Transverse colon (tissue), 4 donors: ENCODE measurements at regions of chr16 and their contacts with region 1.

Region 1: DNA sequence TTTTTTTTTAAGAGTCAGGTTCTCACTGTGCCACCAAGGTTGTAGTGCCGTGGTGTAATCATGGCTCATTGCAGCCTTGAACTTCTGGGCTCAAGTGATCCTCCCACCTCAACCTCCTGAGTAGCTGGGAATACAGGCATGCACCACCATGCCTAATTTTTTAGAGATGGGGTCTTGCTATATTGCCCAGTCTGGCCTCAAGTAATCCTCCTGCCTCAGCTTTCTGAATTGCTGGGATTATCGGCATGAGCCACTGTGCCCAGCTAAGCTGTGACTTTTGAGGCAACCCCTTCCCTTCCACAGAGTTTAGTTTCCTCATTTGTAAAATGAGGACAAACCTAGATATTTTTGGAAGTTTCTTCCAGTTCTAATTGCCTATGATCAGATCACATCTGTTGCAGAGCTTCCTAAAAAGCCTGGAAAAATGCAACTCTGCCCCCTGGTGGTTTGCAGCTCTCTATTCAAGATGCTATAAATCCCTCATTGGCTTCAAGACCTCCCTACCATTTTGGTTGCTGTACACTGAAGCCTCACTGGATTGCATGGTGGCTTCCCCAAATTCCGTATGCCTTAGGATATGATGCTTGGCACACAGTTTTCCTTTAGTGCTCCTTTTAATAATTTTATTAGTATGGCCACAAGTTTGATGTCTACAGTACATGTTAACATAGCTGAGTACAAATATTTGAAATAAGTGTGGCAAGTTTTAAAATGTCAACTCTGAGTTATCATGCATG is 19.3 kb downstream of the GDE1 start:
- DNase-seq: peak; percentile 83
- H3K4me3 ChIP-seq: no peak overlapping the region
- H3K27ac ChIP-seq: no peak overlapping the region
- H3K4me1 ChIP-seq: no peaks in the 10 kb centered on the region
- H3K27me3 ChIP-seq: no peaks in the 10 kb centered on the region
- CTCF ChIP-seq: peak; percentile 64 to 80 (median 74)
- EP300 ChIP-seq: no peak
- POLR2A ChIP-seq: no peak

Region 2: GRCh38 chr16:19094541-19095365 is 407.8 kb before region 1 on chr16:
- in situ Hi-C with region 1: loop called (anchors 10 to 25 kb)
- intact Hi-C with region 1: no loop called
- DNase-seq: peak; percentile 50
- H3K4me3 ChIP-seq: no peak overlapping the region
- H3K27ac ChIP-seq: no peak overlapping the region
- H3K4me1 ChIP-seq: peaks cover 0 to 6% (median 0%) of the 10 kb centered on the region in 4 donors
- H3K27me3 ChIP-seq: no peaks in the 10 kb centered on the region
- CTCF ChIP-seq: no peak
- EP300 ChIP-seq: no peak
- POLR2A ChIP-seq: no peak

Region 3: DNA sequence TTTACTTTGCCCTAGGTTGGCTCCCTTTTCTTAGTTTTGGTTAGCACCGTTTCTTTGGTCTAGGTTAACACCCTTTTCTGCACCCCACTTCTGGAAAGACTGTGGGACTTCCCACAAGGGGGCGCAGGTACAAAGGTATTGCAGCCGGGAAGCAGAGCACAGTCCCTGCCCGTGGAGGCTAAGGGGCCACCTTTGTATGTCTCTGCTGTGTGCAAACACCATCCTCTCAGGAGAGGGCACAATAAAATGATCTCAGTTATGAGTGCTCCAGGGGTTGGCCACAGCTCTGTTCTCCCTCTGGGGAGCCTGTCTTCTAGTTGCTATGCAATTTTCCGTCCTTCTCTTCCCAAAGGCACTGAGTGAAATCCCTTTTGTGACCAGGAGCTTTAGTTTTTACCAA is 113.3 kb before region 1 on chr16:
- in situ Hi-C with region 1: loop called in 1 of 4 experiments (anchors 10 kb)
- intact Hi-C with region 1: no loop called
- DNase-seq: peak; percentile 84
- H3K4me3 ChIP-seq: no peak overlapping the region
- H3K27ac ChIP-seq: peak overlapping the region; percentile 25 to 67 (median 56)
- H3K4me1 ChIP-seq: peaks cover 0 to 26% (median 8%) of the 10 kb centered on the region in 4 donors
- H3K27me3 ChIP-seq: peaks cover 14% of the 10 kb centered on the region
- CTCF ChIP-seq: peak; percentile 39 to 81 (median 56)
- EP300 ChIP-seq: no peak
- POLR2A ChIP-seq: no peak